CD4-positive, alpha-beta T cell (primary cell): ENCODE measurements at regions of chr3 and their contacts with region 1.

Region 1: GRCh38 chr3:187139126-187139894 is at the start of gene RPL39L:
- DNase-seq: peak; percentile 85 to 97 (median 90)
- ATAC-seq: peak; percentile 95
- H3K4me3 ChIP-seq: peak within 1 kb of the TSS; percentile 69
- H3K4me3 Mint-ChIP-seq: peak within 1 kb of the TSS; percentile 90
- H3K27ac ChIP-seq: peak within 1 kb of the TSS; percentile 81 to 85
- H3K27ac Mint-ChIP-seq: peak within 1 kb of the TSS; percentile 93
- H3K4me1 ChIP-seq: peaks cover 16% of the 10 kb centered on the region
- H3K4me1 Mint-ChIP-seq: peaks cover 16% of the 10 kb centered on the region
- H3K27me3 ChIP-seq: no peaks in the 10 kb centered on the region
- H3K27me3 Mint-ChIP-seq: no peaks in the 10 kb centered on the region
- CTCF ChIP-seq: peak; percentile 97
- total RNA-seq, gene RPL39L: 1.1 to 1.7 TPM

Region 2: GRCh38 chr3:186570096-186570940 is 569.0 kb before region 1 on chr3 and contains the start of gene DNAJB11:
- CTCF ChIA-PET with region 1: interaction called, 5 read pairs
- POLR2A ChIA-PET with region 1: interaction called, 7 read pairs
- intact Hi-C with region 1: loop called in 1 of 2 experiments (anchors 10 kb)
- DNase-seq: peak; percentile 91 to 100 (median 97)
- ATAC-seq: peak; percentile 83
- H3K4me3 ChIP-seq: peak within 1 kb of the TSS; percentile 79
- H3K4me3 Mint-ChIP-seq: peak within 1 kb of the TSS; percentile 99
- H3K27ac ChIP-seq: peak within 1 kb of the TSS; percentile 90 to 94
- H3K27ac Mint-ChIP-seq: peak within 1 kb of the TSS; percentile 94
- H3K4me1 ChIP-seq: peaks cover 37% of the 10 kb centered on the region
- H3K4me1 Mint-ChIP-seq: peaks cover 69% of the 10 kb centered on the region
- H3K27me3 ChIP-seq: no peaks in the 10 kb centered on the region
- H3K27me3 Mint-ChIP-seq: no peaks in the 10 kb centered on the region
- CTCF ChIP-seq: no peak
- total RNA-seq, gene DNAJB11: 69.3 to 70.3 TPM

Region 3: DNA sequence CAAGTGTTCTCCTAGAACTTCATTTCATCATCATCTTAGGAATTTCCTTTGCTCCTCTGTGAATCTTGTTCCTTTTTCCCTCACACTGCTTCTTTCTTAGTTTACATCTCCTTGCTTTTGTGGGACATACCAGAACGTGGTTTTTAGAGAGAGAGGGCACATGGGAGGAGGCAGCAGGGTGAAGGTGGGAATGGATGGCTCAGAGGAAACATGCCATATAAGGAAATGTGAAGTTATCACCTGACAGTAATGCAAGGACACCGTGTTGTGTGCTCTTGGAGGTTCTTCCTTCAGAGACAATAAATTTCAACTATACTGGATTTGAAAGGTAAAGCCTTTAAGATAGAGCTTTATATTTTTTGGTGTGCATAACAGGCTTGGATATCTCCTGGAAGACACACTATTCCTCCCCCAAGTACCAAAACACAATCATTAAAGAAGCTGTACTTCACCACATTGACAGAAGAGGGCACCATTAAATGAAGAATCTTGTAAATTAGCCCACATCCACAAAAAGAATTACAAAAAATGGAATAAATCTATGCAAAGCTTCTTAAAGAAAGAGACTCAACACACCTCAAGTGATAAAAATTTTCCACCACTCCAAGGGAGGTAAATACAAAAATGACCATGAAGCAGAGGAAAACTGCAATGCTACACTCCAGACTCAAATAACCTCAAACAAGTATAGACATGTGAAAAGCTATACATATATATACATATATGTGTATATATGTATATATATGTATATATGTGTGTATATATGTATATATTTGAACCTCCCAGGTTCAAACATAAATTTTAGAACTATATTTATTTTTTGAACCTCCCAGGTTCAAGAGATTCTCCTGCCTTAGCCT is 26.1 kb before region 1 on chr3:
- CTCF ChIA-PET with region 1: interaction called, 36 read pairs
- POLR2A ChIA-PET with region 1: interaction called, 24 read pairs
- intact Hi-C with region 1: no loop called
- DNase-seq: peak in 3 of 14 experiments; percentile 58 to 72 (median 68)
- ATAC-seq: peak; percentile 63
- H3K4me3 ChIP-seq: no peak overlapping the region
- H3K4me3 Mint-ChIP-seq: no peak overlapping the region
- H3K27ac ChIP-seq: no peak overlapping the region
- H3K27ac Mint-ChIP-seq: no peak overlapping the region
- H3K4me1 ChIP-seq: peaks cover 2% of the 10 kb centered on the region
- H3K4me1 Mint-ChIP-seq: peaks cover 8% of the 10 kb centered on the region
- H3K27me3 ChIP-seq: no peaks in the 10 kb centered on the region
- H3K27me3 Mint-ChIP-seq: no peaks in the 10 kb centered on the region
- CTCF ChIP-seq: peak; percentile 86

Region 4: DNA sequence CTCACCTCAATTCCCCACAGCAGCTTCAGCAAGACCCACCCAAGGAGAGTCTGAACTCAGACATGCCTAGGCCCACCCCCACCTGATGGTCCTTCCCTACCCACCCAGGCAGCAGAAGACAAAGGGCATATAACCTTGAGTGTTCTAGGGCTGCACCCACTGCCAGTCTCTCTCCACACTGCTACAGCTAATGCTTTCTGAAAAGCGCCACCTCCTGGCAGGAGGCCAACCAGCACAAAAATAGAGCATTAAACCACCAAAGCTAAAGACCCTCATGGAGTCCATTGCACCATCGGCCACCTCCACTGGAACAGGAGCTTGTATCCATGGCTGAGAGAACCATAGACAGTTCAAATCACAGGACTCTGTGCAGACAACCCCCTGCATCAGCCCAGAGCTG is 11.3 kb after region 1 on chr3:
- CTCF ChIA-PET with region 1: interaction called, 39 read pairs
- POLR2A ChIA-PET with region 1: interaction called, 10 read pairs
- intact Hi-C with region 1: no loop called
- DNase-seq: peak; percentile 36 to 76 (median 60)
- ATAC-seq: peak; percentile 55
- H3K4me3 ChIP-seq: no peak overlapping the region
- H3K4me3 Mint-ChIP-seq: no peak overlapping the region
- H3K27ac ChIP-seq: no peak overlapping the region
- H3K27ac Mint-ChIP-seq: no peak overlapping the region
- H3K4me1 ChIP-seq: no peaks in the 10 kb centered on the region
- H3K4me1 Mint-ChIP-seq: peaks cover 8% of the 10 kb centered on the region
- H3K27me3 ChIP-seq: peaks cover 0 to 2% of the 10 kb centered on the region in 2 experiments
- H3K27me3 Mint-ChIP-seq: no peaks in the 10 kb centered on the region
- CTCF ChIP-seq: peak; percentile 34

Region 5: GRCh38 chr3:187164885-187165543 is 25.7 kb after region 1 on chr3:
- CTCF ChIA-PET with region 1: interaction called, 18 read pairs
- POLR2A ChIA-PET with region 1: interaction called, 11 read pairs
- intact Hi-C with region 1: no loop called
- DNase-seq: peak in 10 of 14 experiments; percentile 3 to 84 (median 28)
- ATAC-seq: peak; percentile 81
- H3K4me3 ChIP-seq: no peak overlapping the region
- H3K4me3 Mint-ChIP-seq: no peak overlapping the region
- H3K27ac ChIP-seq: no peak overlapping the region
- H3K27ac Mint-ChIP-seq: no peak overlapping the region
- H3K4me1 ChIP-seq: peaks cover 5% of the 10 kb centered on the region
- H3K4me1 Mint-ChIP-seq: peaks cover 11% of the 10 kb centered on the region
- H3K27me3 ChIP-seq: no peaks in the 10 kb centered on the region
- H3K27me3 Mint-ChIP-seq: no peaks in the 10 kb centered on the region
- CTCF ChIP-seq: peak; percentile 82